ENCODE measurements at regions of chr12 and their contacts with region 1.

Region 1: DNA sequence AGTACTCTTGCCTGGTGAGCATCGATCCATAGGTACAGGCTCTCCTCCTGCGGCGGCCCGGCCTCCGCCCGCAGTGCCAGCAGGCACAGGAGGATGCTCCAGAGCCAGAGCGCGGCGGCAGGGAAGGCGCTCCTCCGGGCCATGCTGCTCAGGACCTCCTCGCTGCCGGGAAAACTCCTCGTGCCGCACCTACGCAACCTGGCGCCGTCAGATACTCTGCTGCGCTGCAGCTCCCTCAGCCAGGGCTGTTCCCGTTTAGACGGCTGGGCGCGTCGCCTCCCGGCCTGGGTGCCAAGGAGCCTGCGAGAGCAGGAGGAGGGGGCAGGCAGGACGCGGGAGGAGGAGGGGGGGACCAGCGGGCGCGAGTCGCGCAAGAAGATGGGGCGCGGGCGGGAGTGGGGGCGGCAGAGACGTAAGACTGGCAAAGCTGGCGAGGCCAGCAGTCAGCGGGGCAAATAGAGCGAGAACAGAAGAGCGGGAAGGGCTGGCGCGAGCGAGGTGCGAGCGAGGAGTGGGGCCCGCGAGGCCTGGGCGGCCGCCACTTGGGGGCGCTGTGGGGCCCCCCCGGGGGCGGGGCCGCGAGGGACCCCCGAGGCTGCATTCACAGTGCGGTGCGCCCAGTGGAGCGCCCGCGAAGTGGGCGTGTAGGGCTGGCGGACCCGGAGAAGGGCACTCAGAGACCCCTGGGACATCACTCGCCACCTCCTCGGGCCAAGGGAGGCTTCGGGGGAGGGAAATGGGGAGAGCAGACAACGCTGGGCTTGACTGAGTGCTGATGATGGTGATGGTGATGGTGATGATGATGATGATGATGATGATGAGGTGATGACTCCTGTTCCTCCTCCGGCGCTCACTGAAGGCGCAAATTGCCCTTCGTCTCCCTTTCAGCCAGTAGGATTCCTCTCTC is at the start of gene WIF1:
- DNase-seq: no peak
- H3K4me3 ChIP-seq: peak within 1 kb of the TSS; percentile 36
- CTCF ChIP-seq: peak; percentile 17

Region 2: DNA sequence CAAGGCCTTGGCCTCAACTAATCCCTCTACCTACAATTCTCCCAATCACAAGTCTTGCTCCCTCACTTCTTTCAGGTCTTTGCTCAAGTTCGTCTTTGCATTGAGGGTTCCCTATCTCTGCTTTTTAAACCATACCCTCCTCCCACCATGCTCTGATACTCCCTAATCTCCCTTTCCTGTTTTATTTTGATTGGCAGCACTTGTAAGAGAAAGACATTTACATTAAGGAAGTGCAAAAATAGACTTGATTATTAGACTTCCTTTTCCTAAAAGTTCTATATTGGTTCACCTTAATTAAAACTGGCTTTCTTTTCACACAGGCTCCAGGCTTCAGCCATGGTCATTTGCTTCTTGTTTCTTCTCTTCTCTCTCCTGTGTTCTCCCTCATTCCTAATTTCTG is 18.1 kb after region 1 on chr12:
- CTCF ChIA-PET with region 1: interaction called, 17 read pairs
- POLR2A ChIA-PET with region 1: no interaction called
- DNase-seq: no peak
- H3K4me3 ChIP-seq: no peak overlapping the region
- CTCF ChIP-seq: no peak